Heart left ventricle (tissue), 16 donors: ENCODE measurements at regions of chr18 and their contacts with region 1.

Region 1: GRCh38 chr18:31429621-31430020 is 17.9 kb upstream of the DSG3 start:
- DNase-seq: no peak
- ATAC-seq: peak in 2 of 4 donors; percentile 20 to 51
- H3K4me3 ChIP-seq: no peak overlapping the region
- H3K27ac ChIP-seq: no peak overlapping the region
- H3K4me1 ChIP-seq: no peaks in the 10 kb centered on the region
- H3K27me3 ChIP-seq: no peaks in the 10 kb centered on the region
- CTCF ChIP-seq: no peak
- POLR2A ChIP-seq: no peak

Region 2: GRCh38 chr18:31386741-31387140 is 42.9 kb before region 1 on chr18:
- intact Hi-C with region 1: loop called in 1 of 10 experiments (anchors 10 kb)
- DNase-seq: no peak
- ATAC-seq: no peak
- H3K4me3 ChIP-seq: no peak overlapping the region
- H3K27ac ChIP-seq: no peak overlapping the region
- H3K4me1 ChIP-seq: no peaks in the 10 kb centered on the region
- H3K27me3 ChIP-seq: no peaks in the 10 kb centered on the region
- CTCF ChIP-seq: no peak
- POLR2A ChIP-seq: no peak

Region 3: GRCh38 chr18:31487246-31488015 is 57.8 kb after region 1 on chr18:
- intact Hi-C with region 1: loop called in 1 of 10 experiments (anchors 10 kb)
- DNase-seq: no peak
- ATAC-seq: no peak
- H3K4me3 ChIP-seq: no peak overlapping the region
- H3K27ac ChIP-seq: no peak overlapping the region
- H3K4me1 ChIP-seq: no peaks in the 10 kb centered on the region
- H3K27me3 ChIP-seq: no peaks in the 10 kb centered on the region
- CTCF ChIP-seq: no peak
- POLR2A ChIP-seq: no peak

Region 4: GRCh38 chr18:31819106-31819924 is 389.7 kb after region 1 on chr18:
- intact Hi-C with region 1: no loop called
- DNase-seq: no peak
- ATAC-seq: peak in 1 of 4 donors; percentile 56
- H3K4me3 ChIP-seq: no peak overlapping the region
- H3K27ac ChIP-seq: no peak overlapping the region
- H3K4me1 ChIP-seq: peaks cover 0 to 6% (median 0%) of the 10 kb centered on the region in 12 donors
- H3K27me3 ChIP-seq: no peaks in the 10 kb centered on the region
- CTCF ChIP-seq: peak; percentile 53 to 79 (median 70)
- POLR2A ChIP-seq: no peak